ENCODE measurements at regions of chr2 and their contacts with region 1.

Region 1: GRCh38 chr2:96260404-96261260 is 5.2 kb downstream of the TMEM127 start:
- DNase-seq: peak; percentile 85
- H3K4me3 ChIP-seq: no peak overlapping the region
- H3K27ac ChIP-seq: peak overlapping the region; percentile 82
- H3K4me1 ChIP-seq: peaks cover 52% of the 10 kb centered on the region
- H3K27me3 ChIP-seq: no peaks in the 10 kb centered on the region
- CTCF ChIP-seq: peak; percentile 29

Region 2: GRCh38 chr2:96145036-96145847 is 115.4 kb before region 1 on chr2 and contains the start of gene DUSP2:
- intact Hi-C with region 1: loop called (anchors 5 kb)
- DNase-seq: peak; percentile 79
- H3K4me3 ChIP-seq: peak within 1 kb of the TSS; percentile 47
- H3K27ac ChIP-seq: peak within 1 kb of the TSS; percentile 57
- H3K4me1 ChIP-seq: no peaks in the 10 kb centered on the region
- H3K27me3 ChIP-seq: no peaks in the 10 kb centered on the region
- CTCF ChIP-seq: no peak
- total RNA-seq, gene DUSP2: 1.6 to 5.1 TPM

Region 3: DNA sequence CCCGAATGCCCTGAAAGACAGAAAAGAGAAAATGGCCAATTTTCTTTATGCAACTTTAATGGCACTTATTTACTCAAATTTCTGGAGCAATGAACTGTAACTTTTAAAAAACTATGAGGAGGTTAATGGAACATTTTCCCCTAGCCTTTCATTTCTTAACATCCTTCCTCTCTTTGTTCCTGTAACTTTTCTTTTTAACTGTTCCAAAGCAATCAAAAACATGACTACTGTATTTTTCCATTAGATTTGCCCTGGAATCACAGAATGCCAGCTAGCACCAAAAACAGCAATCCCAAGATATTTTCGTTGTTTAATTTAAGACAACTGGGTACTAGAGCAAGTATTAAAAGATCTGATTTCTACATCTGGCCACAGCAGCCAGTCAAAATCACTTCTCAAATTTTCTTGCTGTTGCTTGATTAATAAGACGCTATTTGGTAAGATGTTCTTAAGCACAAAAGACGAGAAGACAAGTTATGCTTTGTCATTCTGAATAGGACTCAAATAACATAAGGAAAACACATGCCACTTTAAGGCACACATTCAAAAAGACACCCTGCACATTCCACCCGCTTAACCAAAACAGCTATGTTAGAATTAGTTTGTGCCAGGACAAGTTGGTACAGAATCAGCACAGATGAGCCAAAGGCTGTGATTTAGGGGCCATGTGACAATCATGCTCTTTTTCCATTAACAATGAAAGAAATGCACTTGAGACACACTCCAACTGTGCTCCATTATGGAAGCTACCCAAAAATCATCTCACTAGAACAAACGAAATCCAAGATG is 55.6 kb before region 1 on chr2:
- intact Hi-C with region 1: loop called (anchors 5 kb)
- DNase-seq: no peak
- H3K4me3 ChIP-seq: no peak overlapping the region
- H3K27ac ChIP-seq: peak overlapping the region; percentile 24
- H3K4me1 ChIP-seq: peaks cover 11% of the 10 kb centered on the region
- H3K27me3 ChIP-seq: no peaks in the 10 kb centered on the region
- CTCF ChIP-seq: no peak

Measured in colonic mucosa (tissue), 4 donors.